OCI-LY7 (cell line): ENCODE measurements at regions of chr7 and their contacts with region 1.

Region 1: GRCh38 chr7:7182156-7183060 is at the start of gene C1GALT1:
- DNase-seq: peak; percentile 97
- H3K4me3 ChIP-seq: peak within 1 kb of the TSS; percentile 85
- H3K27ac ChIP-seq: peak within 1 kb of the TSS; percentile 94
- H3K4me1 ChIP-seq: peaks cover 26% of the 10 kb centered on the region
- CTCF ChIP-seq: peak; percentile 66
- total RNA-seq, gene C1GALT1: 18.9 and 28.9 TPM in 2 replicates

Region 2: DNA sequence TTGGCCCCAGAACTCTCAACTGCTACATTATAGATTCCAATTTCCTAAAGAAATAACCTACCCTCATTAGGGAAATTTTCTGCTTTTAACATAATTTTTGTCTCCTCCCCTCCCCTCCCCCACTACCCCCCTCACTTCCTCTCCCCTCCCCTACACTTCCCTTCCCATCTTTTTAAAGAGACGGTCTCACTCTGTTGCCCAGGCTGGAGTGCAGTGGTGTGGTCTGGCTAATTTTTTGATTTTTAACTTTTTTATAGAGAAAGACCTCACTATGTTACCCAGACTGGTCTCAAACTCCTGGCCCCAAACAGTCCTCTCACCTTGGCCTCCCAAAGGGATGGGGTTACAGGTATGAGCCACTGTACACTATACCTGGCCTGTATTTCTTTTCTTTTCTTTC is 30.5 kb before region 1 on chr7:
- CTCF ChIA-PET with region 1: no interaction called
- POLR2A ChIA-PET with region 1: no interaction called
- intact Hi-C with region 1: no loop called
- DNase-seq: no peak
- H3K4me3 ChIP-seq: no peak overlapping the region
- H3K27ac ChIP-seq: no peak overlapping the region
- H3K4me1 ChIP-seq: no peaks in the 10 kb centered on the region
- CTCF ChIP-seq: no peak

Region 3: GRCh38 chr7:7257899-7258692 is 75.7 kb after region 1 on chr7:
- CTCF ChIA-PET with region 1: no interaction called
- POLR2A ChIA-PET with region 1: interaction called, 12 read pairs
- intact Hi-C with region 1: loop called (anchors 2 kb)
- DNase-seq: peak; percentile 60
- H3K4me3 ChIP-seq: peak overlapping the region; percentile 65
- H3K27ac ChIP-seq: peak overlapping the region; percentile 86
- H3K4me1 ChIP-seq: peaks cover 44% of the 10 kb centered on the region
- CTCF ChIP-seq: no peak

Region 4: DNA sequence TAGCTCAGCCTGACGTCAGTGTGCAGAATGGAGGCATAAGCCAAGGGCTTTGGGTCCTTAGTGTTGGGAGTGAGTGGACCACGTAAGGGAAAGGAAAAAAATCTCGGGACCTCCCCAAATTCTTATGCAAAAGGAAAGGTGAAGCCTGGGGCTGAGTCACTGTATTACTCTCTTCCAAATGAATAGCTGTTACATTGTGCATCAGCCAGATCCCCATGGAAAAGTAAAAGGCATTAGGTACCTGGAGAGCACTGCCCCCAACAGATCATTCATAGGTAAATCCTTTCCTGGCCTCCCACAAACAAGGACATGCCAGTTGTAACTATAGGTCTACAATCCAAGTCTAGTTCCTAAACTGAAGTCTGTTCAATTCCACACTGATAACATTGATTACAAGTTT is 170.4 kb after region 1 on chr7:
- CTCF ChIA-PET with region 1: no interaction called
- POLR2A ChIA-PET with region 1: no interaction called
- intact Hi-C with region 1: loop called (anchors 2 kb)
- DNase-seq: no peak
- H3K4me3 ChIP-seq: no peak overlapping the region
- H3K27ac ChIP-seq: no peak overlapping the region
- H3K4me1 ChIP-seq: no peaks in the 10 kb centered on the region
- CTCF ChIP-seq: peak; percentile 30; the same call in 1 of the 2 replicates

Region 5: DNA sequence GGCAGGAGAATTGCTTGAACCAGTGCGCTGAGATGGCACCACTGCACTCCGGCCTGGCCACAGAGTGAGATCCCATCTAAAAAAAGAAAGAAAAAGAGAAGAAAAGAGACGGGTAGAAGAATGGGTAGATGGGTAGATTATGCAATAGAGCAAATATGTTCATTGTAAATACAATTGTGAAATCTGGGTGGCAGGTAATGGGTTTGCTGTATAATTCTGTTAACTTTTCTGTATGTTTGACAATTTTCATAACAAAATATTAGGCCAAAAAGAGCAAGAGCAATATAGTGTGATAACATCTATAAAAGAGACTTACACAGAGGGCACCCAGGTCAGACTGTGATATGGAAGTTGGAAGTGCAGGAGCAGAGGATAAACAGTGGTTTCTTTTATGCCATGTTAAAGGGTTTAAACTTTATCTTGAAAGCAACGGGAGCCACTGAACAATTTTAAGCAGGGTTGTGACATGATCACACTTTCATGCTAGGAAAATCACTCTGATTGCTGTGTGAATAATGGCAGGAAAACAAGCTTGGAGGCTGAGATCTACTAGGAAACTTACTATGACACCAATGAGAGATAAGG is 359.9 kb after region 1 on chr7:
- CTCF ChIA-PET with region 1: no interaction called
- POLR2A ChIA-PET with region 1: interaction called, 3 read pairs
- intact Hi-C with region 1: loop called (anchors 2 kb)
- DNase-seq: no peak
- H3K4me3 ChIP-seq: no peak overlapping the region
- H3K27ac ChIP-seq: no peak overlapping the region
- H3K4me1 ChIP-seq: no peaks in the 10 kb centered on the region
- CTCF ChIP-seq: no peak

Region 6: DNA sequence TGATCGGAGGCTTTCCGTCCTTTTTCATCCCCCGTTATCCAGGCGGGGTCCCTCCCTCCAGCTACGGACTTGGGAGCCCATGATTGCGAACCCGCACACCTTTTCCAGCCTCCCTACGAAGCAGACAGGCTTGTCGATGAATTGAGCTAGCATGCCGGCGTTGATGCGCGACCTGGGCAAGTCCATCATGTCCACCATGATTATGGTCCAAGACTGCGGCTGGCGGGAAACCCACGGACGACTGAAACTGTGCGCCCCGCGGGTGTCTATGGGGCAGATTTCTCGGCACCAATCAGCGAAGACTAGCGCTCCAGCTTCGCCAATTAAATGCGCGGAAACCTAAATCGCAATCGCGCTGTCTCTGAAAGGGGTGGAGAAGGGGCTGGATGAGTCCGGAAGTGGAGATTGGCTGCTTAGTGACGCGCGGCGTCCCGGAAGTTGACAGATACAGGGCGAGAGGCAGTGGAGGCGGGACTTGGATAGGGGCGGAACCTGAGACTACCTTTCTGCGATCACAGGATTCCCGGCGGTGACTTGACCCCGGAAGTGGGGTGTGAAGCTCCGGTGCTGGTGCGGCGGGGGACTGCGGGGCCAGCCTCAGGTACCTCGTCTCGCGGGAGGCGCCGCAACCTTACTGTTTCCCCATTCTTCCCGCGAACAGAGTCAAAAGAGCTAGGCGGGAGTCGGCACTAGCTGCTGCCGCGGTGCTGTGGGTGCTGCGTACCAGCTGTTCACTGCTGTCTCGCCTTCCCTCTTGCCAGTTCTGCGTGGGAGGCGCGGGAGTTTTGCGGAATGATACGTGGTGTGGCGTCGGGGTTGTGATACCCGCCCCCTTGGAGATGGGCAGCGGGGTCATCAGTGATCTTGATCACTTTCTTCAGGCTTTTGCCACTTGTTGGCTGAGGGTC is 458.1 kb after region 1 on chr7 and contains the start of gene UMAD1:
- CTCF ChIA-PET with region 1: interaction called, 3 read pairs
- POLR2A ChIA-PET with region 1: interaction called, 5 read pairs
- intact Hi-C with region 1: loop called (anchors 2 kb)
- DNase-seq: peak; percentile 99
- H3K4me3 ChIP-seq: peak within 1 kb of the TSS; percentile 92
- H3K27ac ChIP-seq: peak within 1 kb of the TSS; percentile 72
- H3K4me1 ChIP-seq: peaks cover 28% of the 10 kb centered on the region
- CTCF ChIP-seq: no peak
- total RNA-seq, gene UMAD1: 8.7 and 14.2 TPM in 2 replicates